PC-3 (cell line): ENCODE measurements at regions of chr11 and their contacts with region 1.

Region 1: DNA sequence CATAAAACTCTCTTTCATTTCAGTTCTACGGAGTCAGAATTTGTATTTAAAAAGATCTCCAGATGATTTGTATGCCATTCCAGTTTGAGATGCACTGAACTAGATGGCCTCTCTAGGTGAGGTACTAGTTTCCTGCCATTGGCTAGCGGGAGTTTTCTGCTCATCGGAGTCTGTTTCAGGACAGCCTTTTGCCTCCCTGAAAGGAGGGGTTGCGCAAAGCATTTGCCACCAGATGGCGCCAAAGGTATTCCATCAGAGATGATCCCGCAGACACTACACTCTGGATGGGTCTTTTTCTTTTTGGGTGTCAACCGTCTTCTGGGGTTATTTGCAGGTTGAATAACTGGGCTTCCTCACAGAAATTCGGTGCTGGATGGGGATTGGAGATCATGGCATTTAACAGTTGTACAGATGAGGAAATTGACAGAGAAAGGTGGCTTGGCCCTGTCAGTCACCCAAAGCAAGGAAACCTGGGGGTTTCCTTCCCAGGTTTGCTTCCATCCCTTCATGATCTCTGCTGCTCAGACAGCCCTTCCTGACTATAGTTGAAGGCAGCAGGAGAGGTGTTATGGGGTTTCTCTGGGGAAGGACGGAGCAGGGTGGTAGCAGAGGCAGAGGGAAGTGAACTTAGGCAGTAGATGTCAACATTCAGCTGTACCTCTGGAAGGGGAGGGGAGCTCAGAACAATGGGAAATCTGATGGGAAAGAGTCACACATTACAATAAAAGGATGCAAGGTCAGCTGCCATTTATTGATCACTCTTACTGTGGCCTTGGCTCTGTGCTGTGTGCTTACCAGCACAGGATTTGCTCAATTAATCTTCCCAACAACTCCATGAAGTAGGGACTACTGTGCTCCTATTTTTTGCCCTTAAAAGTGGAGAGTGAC is 81.6 kb downstream of the CCDC81 start:
- DNase-seq: peak; percentile 89
- ATAC-seq: peak; percentile 65
- H3K4me3 ChIP-seq: no peak overlapping the region
- H3K27ac ChIP-seq: peak overlapping the region; percentile 63
- H3K4me1 ChIP-seq: peaks cover 33% of the 10 kb centered on the region
- H3K27me3 ChIP-seq: no peaks in the 10 kb centered on the region
- CTCF ChIP-seq: peak; percentile 86

Region 2: DNA sequence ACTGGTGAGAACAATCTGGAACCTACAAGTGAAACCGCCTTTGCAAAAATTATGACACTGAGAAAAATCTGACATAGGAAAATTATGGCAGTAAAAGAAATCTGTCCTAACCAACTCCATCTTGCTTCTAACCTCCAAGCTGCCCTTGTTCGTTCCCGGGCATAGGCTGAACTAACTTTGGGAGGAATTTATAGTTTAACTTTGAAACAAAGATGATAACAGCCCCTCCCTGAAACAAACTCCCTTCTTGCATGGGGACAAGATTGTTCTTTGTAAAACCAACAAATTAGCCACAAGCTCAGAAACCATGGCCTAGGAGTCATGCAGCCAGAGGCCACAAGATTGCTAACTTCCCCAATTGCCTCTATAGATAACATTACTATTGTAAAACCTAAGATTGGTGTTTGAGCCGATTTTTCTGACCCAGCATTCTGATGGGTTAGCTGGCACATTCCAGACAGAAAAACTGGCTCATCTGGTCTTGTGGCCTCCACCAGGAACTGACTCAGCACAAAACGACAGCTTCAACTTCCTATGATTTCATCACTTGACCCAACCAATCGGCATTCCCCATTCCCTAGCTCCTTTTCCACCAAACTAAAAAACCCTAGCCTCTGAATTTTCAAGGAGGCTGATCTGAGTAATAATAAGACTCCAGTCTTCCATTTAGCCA is 85.2 kb before region 1 on chr11:
- CTCF ChIA-PET with region 1: no interaction called
- POLR2A ChIA-PET with region 1: no interaction called
- intact Hi-C with region 1: no loop called
- DNase-seq: peak; percentile 80
- ATAC-seq: no peak
- H3K4me3 ChIP-seq: no peak overlapping the region
- H3K27ac ChIP-seq: peak overlapping the region; percentile 50
- H3K4me1 ChIP-seq: peaks cover 6% of the 10 kb centered on the region
- H3K27me3 ChIP-seq: no peaks in the 10 kb centered on the region
- CTCF ChIP-seq: no peak

Region 3: GRCh38 chr11:86483940-86484794 is 27.9 kb after region 1 on chr11:
- CTCF ChIA-PET with region 1: interaction called, 9 read pairs
- POLR2A ChIA-PET with region 1: no interaction called
- intact Hi-C with region 1: loop called (anchors 1 kb)
- DNase-seq: peak; percentile 92
- ATAC-seq: peak; percentile 92
- H3K4me3 ChIP-seq: no peak overlapping the region
- H3K27ac ChIP-seq: peak overlapping the region; percentile 99
- H3K4me1 ChIP-seq: peaks cover 31% of the 10 kb centered on the region
- H3K27me3 ChIP-seq: no peaks in the 10 kb centered on the region
- CTCF ChIP-seq: no peak

Region 4: DNA sequence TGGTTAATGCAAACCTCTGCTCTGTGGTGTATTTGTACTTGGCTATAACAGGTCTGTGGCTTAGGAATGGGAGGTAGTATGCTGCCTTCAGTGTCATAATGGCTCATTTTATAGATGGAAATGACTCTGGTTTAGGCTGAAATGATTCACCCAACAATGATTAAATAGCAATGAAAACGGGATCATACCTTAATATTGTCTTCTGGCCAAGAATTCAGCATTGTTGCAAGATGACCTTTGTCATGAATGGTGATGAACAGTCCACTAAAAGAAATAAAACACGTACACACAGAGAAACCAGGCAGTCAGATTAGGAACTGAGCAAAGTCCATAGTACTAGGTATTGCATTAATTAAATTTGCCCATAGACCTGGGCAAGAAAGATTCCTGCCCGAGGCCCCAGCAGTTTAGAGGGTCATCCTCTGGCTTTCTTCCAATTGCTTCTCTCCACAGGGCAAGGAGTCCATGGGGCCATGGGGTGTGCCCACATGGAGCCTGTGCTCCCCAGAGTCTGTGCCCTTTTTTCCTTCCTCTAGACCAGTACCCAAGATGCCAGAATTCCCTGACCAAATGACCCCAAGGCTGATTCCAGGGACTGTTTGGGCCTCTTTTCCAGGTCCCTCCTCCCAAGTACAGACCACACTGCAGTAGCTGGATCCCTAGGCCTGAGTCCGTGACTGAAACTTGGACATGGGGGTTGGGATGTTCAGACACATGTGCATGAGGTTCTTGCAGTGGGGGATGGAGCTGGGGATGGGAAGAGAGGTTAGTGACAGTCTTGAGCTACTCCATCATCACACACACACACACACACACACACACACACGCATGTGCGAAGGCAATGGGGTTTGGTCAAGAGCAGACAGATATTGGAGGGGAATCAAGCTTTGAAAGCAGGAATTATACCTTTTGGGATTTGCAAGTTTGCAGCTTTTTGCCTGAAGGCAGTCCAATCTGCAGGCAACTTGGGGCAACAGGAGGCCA is 52.6 kb after region 1 on chr11:
- CTCF ChIA-PET with region 1: no interaction called
- POLR2A ChIA-PET with region 1: no interaction called
- intact Hi-C with region 1: loop called (anchors 2 kb)
- DNase-seq: peak; percentile 92
- ATAC-seq: peak; percentile 88
- H3K4me3 ChIP-seq: peak overlapping the region; percentile 32
- H3K27ac ChIP-seq: peak overlapping the region; percentile 99
- H3K4me1 ChIP-seq: peaks cover 43% of the 10 kb centered on the region
- H3K27me3 ChIP-seq: no peaks in the 10 kb centered on the region
- CTCF ChIP-seq: no peak

Region 5: GRCh38 chr11:86577663-86578636 is 121.7 kb after region 1 on chr11:
- CTCF ChIA-PET with region 1: no interaction called
- POLR2A ChIA-PET with region 1: no interaction called
- intact Hi-C with region 1: no loop called
- DNase-seq: peak; percentile 88
- ATAC-seq: peak; percentile 87
- H3K4me3 ChIP-seq: no peak overlapping the region
- H3K27ac ChIP-seq: peak overlapping the region; percentile 81
- H3K4me1 ChIP-seq: peaks cover 46% of the 10 kb centered on the region
- H3K27me3 ChIP-seq: no peaks in the 10 kb centered on the region
- CTCF ChIP-seq: no peak

Region 6: GRCh38 chr11:86592659-86593451 is 136.6 kb after region 1 on chr11:
- CTCF ChIA-PET with region 1: no interaction called
- POLR2A ChIA-PET with region 1: no interaction called
- intact Hi-C with region 1: loop called (anchors 5 kb)
- DNase-seq: peak; percentile 96
- ATAC-seq: peak; percentile 79
- H3K4me3 ChIP-seq: no peak overlapping the region
- H3K27ac ChIP-seq: peak overlapping the region; percentile 95
- H3K4me1 ChIP-seq: peaks cover 39% of the 10 kb centered on the region
- H3K27me3 ChIP-seq: no peaks in the 10 kb centered on the region
- CTCF ChIP-seq: no peak

Region 7: DNA sequence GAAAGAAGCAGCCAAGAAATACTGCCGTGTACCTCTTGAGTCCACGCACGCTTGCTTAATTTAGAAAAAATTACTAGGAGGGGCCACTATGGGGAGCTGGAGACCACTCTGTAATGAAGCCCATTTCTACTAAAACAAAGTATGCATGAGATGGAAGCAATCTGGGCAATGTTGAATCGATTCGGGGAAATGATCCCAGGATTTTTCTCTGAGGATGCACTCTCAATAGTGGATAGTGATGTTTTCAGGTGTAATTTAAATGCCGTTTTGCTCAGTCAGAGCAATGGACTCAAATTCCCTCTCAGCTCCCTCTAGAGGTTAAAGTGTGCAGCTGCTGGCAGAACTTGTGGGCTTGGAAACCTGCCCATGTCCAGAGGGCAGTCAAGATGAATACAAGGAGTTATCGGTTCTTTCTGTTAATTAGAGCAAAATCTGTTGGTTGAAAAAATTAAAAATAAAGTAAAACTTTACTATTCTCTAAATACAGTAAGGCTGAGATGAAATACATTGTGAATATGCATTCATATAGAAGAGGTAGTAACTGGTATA is 152.0 kb after region 1 on chr11:
- CTCF ChIA-PET with region 1: no interaction called
- POLR2A ChIA-PET with region 1: no interaction called
- intact Hi-C with region 1: loop called (anchors 2 kb)
- DNase-seq: peak; percentile 82
- ATAC-seq: peak; percentile 39; the same call in 1 of the 2 replicates
- H3K4me3 ChIP-seq: no peak overlapping the region
- H3K27ac ChIP-seq: peak overlapping the region; percentile 85
- H3K4me1 ChIP-seq: peaks cover 35% of the 10 kb centered on the region
- H3K27me3 ChIP-seq: no peaks in the 10 kb centered on the region
- CTCF ChIP-seq: peak; percentile 96

Region 8: DNA sequence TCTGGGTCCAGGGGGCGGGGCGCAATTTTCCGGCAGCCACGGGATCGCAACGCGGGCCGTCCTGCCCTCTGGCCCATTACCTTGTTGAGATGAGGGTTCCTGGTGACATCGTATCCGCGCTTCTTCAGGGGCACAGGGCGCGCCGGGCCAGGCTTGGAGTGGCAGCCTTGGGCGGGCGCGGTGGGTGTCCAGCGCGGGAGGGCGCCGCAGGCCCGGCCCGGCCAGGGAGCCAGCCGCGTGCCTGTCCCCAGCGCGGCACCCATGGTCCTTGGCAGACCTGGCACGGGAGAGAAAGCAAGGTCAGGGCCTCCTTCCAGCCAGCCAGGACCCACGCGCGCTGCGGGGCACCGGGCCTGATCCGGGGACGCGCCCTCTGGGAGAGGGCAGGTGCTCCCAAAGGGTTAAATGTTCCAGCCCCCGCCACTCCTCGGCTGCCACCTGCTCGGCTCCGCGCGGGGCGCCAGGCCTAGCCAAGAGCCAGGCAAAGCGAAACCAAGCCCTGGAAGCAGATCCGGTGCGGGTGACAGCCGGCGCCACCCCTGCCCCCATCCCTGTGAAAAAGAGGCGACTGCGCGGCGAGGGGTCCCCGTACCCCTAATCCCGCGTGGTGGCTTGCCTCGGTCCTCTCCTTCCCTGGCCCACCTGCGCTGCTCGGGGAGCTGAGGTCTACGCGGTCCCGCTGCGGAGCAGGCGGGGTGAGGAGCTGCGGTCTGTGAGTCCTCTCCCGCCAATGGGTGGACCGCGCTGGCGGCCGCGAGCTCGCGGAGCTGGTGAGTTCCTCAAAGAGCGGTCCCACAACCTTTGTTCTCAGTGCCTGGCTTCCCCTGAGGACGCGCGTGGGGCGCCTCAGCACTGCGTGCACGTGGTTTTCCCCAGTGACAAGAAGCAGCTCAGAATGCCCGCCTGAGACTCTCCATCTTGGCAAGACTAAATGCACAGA is 215.7 kb after region 1 on chr11 and contains the start of gene ME3:
- CTCF ChIA-PET with region 1: no interaction called
- POLR2A ChIA-PET with region 1: no interaction called
- intact Hi-C with region 1: loop called (anchors 10 kb)
- DNase-seq: peak; percentile 56
- ATAC-seq: peak; percentile 65
- H3K4me3 ChIP-seq: peak within 1 kb of the TSS; percentile 69
- H3K27ac ChIP-seq: peak within 1 kb of the TSS; percentile 83
- H3K4me1 ChIP-seq: peaks cover 45% of the 10 kb centered on the region
- H3K27me3 ChIP-seq: no peaks in the 10 kb centered on the region
- CTCF ChIP-seq: no peak
- total RNA-seq, gene ME3: 80.8 and 83.8 TPM in 2 replicates

Region 9: DNA sequence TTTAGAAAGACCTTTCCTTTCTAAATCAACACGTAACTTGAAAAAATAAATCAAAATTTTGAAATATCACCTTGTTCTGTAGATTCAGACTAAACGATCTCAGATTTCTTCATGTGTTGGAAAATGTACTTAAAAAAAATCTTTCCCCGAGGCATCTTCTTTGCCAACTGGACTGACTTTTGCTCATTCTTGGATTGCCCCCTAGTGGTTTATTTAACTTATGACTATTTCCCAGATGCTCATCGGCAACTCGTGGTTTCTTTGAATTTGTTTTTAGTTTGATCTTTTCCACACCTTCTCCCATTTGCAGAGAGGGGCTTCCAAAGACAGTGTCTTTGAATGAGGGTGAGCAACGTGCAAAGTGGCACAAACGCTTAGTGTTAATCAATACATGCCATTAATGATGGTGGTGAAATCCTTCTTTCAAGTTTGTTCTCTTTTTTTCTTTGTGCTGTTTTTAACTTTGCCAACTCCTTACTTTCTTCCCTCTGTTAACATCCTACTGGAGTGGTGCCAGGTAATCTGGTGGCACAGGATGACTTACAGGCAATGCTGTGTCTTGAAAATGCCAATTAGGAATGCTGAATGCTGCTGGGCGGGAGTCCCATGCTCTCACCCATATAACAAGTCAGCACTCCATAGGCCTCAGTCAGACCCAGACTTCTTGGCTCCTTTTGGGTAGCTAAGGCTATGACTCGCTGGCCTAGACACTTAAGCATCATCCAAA is 362.3 kb after region 1 on chr11:
- CTCF ChIA-PET with region 1: no interaction called
- POLR2A ChIA-PET with region 1: interaction called, 3 read pairs
- intact Hi-C with region 1: loop called (anchors 1 kb)
- DNase-seq: peak; percentile 78
- ATAC-seq: peak; percentile 33
- H3K4me3 ChIP-seq: no peak overlapping the region
- H3K27ac ChIP-seq: peak overlapping the region; percentile 49
- H3K4me1 ChIP-seq: peaks cover 42% of the 10 kb centered on the region
- H3K27me3 ChIP-seq: no peaks in the 10 kb centered on the region
- CTCF ChIP-seq: peak; percentile 75